ENCODE measurements at regions of chr14 and their contacts with region 1.

Region 1: DNA sequence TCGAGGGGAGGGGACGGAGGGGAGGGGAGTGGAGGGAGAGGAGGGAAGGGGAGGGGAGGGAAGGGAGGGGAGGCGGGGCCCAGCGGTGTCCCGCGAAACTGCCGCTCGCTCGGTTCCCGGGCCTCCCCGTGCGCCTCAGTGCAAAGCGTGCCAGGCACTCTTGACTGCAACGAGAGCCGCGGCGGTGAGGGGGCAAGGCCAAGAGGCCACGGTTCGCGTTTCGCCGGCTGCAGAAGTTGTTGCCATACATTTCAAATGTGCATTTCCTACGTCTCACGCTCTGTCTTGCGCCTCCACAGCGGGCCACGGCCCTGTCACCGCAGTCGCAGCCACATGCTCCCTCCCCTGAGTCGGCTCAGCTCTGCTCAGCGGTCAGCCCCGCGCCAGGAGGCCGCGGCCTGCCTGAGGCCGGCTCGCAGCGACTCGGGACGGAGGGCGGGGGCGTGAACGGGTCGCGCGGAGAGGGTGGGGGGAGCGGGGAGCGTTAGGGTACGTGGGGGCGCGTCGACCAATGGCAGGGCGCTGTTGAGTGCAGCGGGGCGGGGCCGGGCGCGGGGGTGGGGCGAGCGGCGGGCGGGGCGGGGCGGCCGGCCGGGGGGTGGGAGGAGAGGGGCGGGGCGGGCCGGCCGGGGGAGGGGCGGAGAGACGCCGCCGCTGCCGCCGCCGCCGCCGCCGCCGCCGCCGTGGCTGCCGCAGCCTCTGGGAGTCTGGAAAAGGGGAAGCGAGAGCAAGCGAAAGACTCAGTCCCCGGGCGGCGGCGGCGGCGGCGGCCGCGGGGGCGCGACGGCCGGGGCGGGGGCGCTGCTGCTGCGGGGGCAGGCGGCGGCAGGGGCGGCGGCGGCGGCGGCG is at the start of gene PPP2R5C:
- DNase-seq: peak; percentile 84 to 96
- H3K4me3 ChIP-seq: peak within 1 kb of the TSS; percentile 99
- H3K27ac ChIP-seq: peak within 1 kb of the TSS; percentile 83
- H3K4me1 ChIP-seq: peaks cover 23% of the 10 kb centered on the region
- H3K27me3 ChIP-seq: no peaks in the 10 kb centered on the region
- CTCF ChIP-seq: no peak
- total RNA-seq, gene PPP2R5C: 301 and 401 TPM in 2 replicates

Region 2: GRCh38 chr14:101288436-101289229 is 472.6 kb before region 1 on chr14:
- CTCF ChIA-PET with region 1: no interaction called
- POLR2A ChIA-PET with region 1: no interaction called
- intact Hi-C with region 1: no loop called
- DNase-seq: no peak
- H3K4me3 ChIP-seq: no peak overlapping the region
- H3K27ac ChIP-seq: no peak overlapping the region
- H3K4me1 ChIP-seq: no peaks in the 10 kb centered on the region
- H3K27me3 ChIP-seq: no peaks in the 10 kb centered on the region
- CTCF ChIP-seq: no peak

Region 3: GRCh38 chr14:101781240-101782061 is 20.2 kb after region 1 on chr14:
- CTCF ChIA-PET with region 1: no interaction called
- POLR2A ChIA-PET with region 1: no interaction called
- intact Hi-C with region 1: no loop called
- DNase-seq: no peak
- H3K4me3 ChIP-seq: no peak overlapping the region
- H3K27ac ChIP-seq: no peak overlapping the region
- H3K4me1 ChIP-seq: no peaks in the 10 kb centered on the region
- H3K27me3 ChIP-seq: no peaks in the 10 kb centered on the region
- CTCF ChIP-seq: no peak

Region 4: DNA sequence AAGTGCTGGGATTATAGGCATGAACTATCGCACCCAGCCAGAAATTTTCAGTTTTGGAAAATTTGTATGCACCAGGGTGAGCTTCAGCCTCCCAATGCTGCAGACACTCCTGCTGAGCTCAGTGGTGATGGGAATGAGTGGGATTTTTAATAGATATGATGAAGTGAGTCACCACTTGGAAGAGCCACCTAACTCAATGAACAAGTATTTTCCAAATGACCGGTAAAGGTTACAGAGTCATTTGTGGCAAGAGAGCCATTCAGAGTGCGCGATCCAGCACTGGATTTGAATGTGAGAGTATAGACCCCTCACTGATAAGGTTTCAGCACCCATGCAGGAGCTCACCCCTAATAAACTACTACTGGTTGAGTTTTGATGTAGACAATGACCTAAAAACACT is 100.9 kb after region 1 on chr14:
- CTCF ChIA-PET with region 1: no interaction called
- POLR2A ChIA-PET with region 1: no interaction called
- intact Hi-C with region 1: no loop called
- DNase-seq: no peak
- H3K4me3 ChIP-seq: no peak overlapping the region
- H3K27ac ChIP-seq: no peak overlapping the region
- H3K4me1 ChIP-seq: no peaks in the 10 kb centered on the region
- H3K27me3 ChIP-seq: no peaks in the 10 kb centered on the region
- CTCF ChIP-seq: no peak

Region 5: GRCh38 chr14:101932673-101933072 is 171.4 kb after region 1 on chr14:
- CTCF ChIA-PET with region 1: interaction called, 10 read pairs
- POLR2A ChIA-PET with region 1: interaction called, 5 read pairs
- intact Hi-C with region 1: no loop called
- DNase-seq: no peak
- H3K4me3 ChIP-seq: no peak overlapping the region
- H3K27ac ChIP-seq: no peak overlapping the region
- H3K4me1 ChIP-seq: no peaks in the 10 kb centered on the region
- H3K27me3 ChIP-seq: no peaks in the 10 kb centered on the region
- CTCF ChIP-seq: no peak

Region 6: GRCh38 chr14:101972268-101972774 is 211.1 kb after region 1 on chr14:
- CTCF ChIA-PET with region 1: no interaction called
- POLR2A ChIA-PET with region 1: interaction called, 18 read pairs
- intact Hi-C with region 1: no loop called
- DNase-seq: peak; percentile 96 to 100
- H3K4me3 ChIP-seq: peak overlapping the region; percentile 47; the same call in 1 of the 2 replicates
- H3K27ac ChIP-seq: peak overlapping the region; percentile 96
- H3K4me1 ChIP-seq: peaks cover 72% of the 10 kb centered on the region
- H3K27me3 ChIP-seq: no peaks in the 10 kb centered on the region
- CTCF ChIP-seq: no peak

Region 7: GRCh38 chr14:102139248-102140026 is 378.2 kb after region 1 on chr14 and contains the start of gene WDR20:
- CTCF ChIA-PET with region 1: no interaction called
- POLR2A ChIA-PET with region 1: no interaction called
- intact Hi-C with region 1: loop called (anchors 2 kb)
- DNase-seq: peak; percentile 98 to 100
- H3K4me3 ChIP-seq: peak within 1 kb of the TSS; percentile 75
- H3K27ac ChIP-seq: peak within 1 kb of the TSS; percentile 44
- H3K4me1 ChIP-seq: peaks cover 31% of the 10 kb centered on the region
- H3K27me3 ChIP-seq: no peaks in the 10 kb centered on the region
- CTCF ChIP-seq: peak; percentile 19; the same call in 1 of the 2 replicates
- total RNA-seq, gene WDR20: 62.2 and 93.5 TPM in 2 replicates

Region 8: GRCh38 chr14:103185051-103185992 is 1424.1 kb after region 1 on chr14:
- CTCF ChIA-PET with region 1: no interaction called
- POLR2A ChIA-PET with region 1: interaction called, 13 read pairs
- intact Hi-C with region 1: no loop called
- DNase-seq: peak; percentile 49 to 96
- H3K4me3 ChIP-seq: peak overlapping the region; percentile 14; the same call in 1 of the 2 replicates
- H3K27ac ChIP-seq: peak overlapping the region; percentile 92
- H3K4me1 ChIP-seq: peaks cover 37% of the 10 kb centered on the region
- H3K27me3 ChIP-seq: no peaks in the 10 kb centered on the region
- CTCF ChIP-seq: peak; percentile 100

Measured in PC-9 (cell line).